Right ventricle myocardium superior (tissue), 1 donor: ENCODE measurements at regions of chr11 and their contacts with region 1.

Region 1: DNA sequence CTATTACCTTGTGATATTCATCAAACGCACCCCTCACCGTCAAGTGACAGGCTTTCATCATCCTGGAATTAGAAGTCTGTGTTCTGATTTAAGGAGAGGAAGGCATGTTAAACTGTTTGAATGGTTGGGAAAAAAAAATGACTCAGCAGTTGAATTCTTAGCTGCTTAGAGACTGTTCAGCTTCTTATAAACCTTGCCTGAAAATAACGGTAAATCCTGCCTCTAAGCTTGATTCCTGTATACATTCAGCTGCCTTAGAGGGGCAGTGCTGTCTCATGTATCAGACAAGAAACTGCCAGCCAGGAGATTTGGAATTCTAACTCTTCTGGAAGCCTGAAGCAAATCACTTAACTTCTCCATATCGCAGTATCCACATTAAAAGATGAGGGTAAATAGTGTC is 437.4 kb downstream of the JRKL start:
- DNase-seq: no peak
- ATAC-seq: peak; percentile 85

Region 2: DNA sequence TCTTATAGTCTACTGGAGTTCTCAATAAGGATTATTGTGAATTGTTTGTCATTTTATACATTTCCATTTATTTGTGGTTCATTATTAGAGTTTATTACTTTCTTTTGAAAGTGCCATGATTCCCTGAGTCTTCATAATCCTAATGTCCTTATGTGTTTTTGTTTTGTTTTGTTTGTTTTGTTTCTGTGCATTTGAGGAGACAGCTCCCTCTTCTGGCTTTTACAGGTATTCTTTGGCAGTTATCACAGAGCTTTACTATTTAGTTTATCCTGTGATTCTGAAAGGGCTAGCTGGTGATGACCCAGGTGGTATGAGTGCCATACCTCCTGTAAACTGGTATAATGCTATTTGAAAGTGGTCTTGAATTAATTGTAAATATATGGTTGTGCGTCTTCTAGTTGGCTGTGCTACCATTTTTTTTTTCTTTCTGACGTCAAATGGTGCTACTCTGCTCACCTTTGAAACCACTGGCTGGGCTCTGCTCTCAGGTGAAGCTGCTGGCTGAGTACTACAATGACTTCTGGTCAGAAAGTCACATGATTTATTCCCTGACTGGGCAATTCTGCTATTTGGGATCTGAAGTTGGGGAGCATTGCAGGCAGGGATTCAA is 313.8 kb after region 1 on chr11:
- intact Hi-C with region 1: loop called (anchors 10 kb)
- DNase-seq: no peak
- ATAC-seq: no peak